ENCODE measurements at regions of chr1 and their contacts with region 1.

Region 1: DNA sequence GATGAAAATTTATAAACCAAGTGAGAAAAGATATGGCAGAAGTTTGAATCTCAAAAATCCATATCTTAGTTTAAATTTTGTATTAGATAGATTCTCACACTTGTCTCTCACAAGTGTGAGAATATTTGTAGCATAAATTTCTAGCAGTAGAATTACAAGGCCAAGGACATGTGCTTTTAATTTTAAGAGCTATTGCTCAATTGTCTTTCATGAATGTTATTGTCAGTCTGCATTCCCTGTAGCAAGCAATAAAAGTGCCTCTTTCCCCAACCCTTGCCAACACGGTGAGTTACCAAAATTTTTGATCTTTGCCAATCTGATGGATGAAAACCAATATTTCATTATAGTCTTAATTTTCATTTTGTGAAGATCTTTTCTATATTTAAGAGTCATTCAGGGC is 64.0 kb downstream of the CTH start:
- DNase-seq: no peak
- H3K4me3 ChIP-seq: no peak overlapping the region
- H3K4me3 Mint-ChIP-seq: peak overlapping the region in 1 of 8 donors; percentile 13
- H3K27ac ChIP-seq: no peak overlapping the region
- H3K27ac Mint-ChIP-seq: no peak overlapping the region
- H3K4me1 ChIP-seq: no peaks in the 10 kb centered on the region
- H3K4me1 Mint-ChIP-seq: no peaks in the 10 kb centered on the region
- H3K27me3 ChIP-seq: no peaks in the 10 kb centered on the region
- H3K27me3 Mint-ChIP-seq: peaks cover 3 to 6% of the 10 kb centered on the region in 2 donors

Region 2: DNA sequence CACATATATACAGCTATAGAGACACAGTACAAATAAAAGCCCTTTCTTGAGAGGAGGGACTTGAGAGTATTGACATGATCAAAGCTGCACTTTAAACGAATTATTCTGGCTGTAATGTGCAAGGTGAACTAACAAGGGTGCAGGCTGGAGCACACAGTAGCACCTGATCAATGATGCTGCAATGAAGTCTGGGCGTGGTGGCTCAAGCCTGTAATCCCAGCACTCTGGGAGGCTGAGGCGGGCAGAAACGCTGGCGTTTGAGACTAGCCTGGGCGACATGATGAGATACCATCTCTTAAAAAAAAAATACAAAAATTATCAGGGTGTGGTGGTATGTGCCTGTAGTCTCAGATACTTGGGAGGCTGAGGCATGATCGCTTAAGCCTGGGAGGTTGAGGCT is 78.0 kb before region 1 on chr1:
- CTCF ChIA-PET with region 1: no interaction called
- POLR2A ChIA-PET with region 1: no interaction called
- intact Hi-C with region 1: no loop called
- DNase-seq: no peak
- H3K4me3 ChIP-seq: no peak overlapping the region
- H3K4me3 Mint-ChIP-seq: no peak overlapping the region
- H3K27ac ChIP-seq: no peak overlapping the region
- H3K27ac Mint-ChIP-seq: no peak overlapping the region
- H3K4me1 ChIP-seq: no peaks in the 10 kb centered on the region
- H3K4me1 Mint-ChIP-seq: no peaks in the 10 kb centered on the region
- H3K27me3 ChIP-seq: no peaks in the 10 kb centered on the region
- H3K27me3 Mint-ChIP-seq: peaks cover 4 to 12% of the 10 kb centered on the region in 2 donors

Region 3: DNA sequence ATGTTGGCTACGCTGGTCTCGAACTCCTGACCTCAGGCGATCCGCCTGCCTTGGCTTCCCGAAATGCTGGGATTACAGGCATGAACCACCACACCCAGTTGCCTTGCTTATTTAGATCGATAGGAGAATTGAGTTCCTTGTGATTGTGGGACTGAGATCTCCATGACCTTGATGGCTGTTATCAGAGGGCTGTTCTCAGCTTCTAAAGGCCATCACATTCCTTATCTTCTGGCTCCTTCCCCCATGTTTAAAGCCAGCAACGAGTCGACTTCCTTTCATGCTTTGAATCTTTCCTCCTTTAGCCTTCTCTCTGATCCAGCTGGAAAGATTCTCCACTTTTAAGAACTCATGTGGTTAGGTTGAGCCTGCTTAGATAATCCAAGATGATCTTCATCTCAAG is 26.0 kb before region 1 on chr1:
- CTCF ChIA-PET with region 1: no interaction called
- POLR2A ChIA-PET with region 1: no interaction called
- intact Hi-C with region 1: loop called (anchors 1 kb)
- DNase-seq: no peak
- H3K4me3 ChIP-seq: no peak overlapping the region
- H3K4me3 Mint-ChIP-seq: no peak overlapping the region
- H3K27ac ChIP-seq: no peak overlapping the region
- H3K27ac Mint-ChIP-seq: no peak overlapping the region
- H3K4me1 ChIP-seq: no peaks in the 10 kb centered on the region
- H3K4me1 Mint-ChIP-seq: no peaks in the 10 kb centered on the region
- H3K27me3 ChIP-seq: no peaks in the 10 kb centered on the region
- H3K27me3 Mint-ChIP-seq: peaks cover 4 to 7% of the 10 kb centered on the region in 2 donors

Region 4: DNA sequence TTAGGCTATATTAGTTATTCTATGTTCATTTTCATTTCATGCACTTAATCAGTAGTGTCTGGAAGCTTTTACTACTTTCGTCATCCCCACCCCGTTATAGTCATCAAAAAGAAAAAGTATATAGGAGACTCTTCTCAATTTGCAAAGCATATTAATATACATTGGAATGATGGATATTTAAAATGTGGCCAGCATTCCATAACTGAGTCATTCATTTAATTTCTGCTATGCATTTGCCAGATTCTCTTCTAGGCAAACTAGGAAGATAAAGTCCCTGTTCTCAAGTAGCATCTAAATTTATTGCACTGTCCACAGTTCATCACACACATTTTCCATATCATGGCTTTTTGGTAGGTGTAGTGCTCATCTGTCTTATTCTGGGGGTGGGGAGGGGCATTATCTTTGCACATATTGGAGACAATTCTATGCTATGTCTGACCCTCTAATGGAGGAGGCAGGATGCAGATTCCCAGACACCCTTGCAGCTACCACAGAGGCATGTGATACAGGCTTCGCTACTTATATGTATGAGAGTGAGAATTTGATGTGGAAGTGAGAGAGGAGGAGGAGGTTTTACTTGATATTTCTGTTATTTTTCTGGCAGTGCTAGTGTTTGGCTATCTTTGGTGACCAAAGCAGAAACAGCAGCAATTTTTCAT is 61.8 kb after region 1 on chr1:
- CTCF ChIA-PET with region 1: no interaction called
- POLR2A ChIA-PET with region 1: no interaction called
- intact Hi-C with region 1: no loop called
- DNase-seq: no peak
- H3K4me3 ChIP-seq: no peak overlapping the region
- H3K4me3 Mint-ChIP-seq: no peak overlapping the region
- H3K27ac ChIP-seq: no peak overlapping the region
- H3K27ac Mint-ChIP-seq: no peak overlapping the region
- H3K4me1 ChIP-seq: no peaks in the 10 kb centered on the region
- H3K4me1 Mint-ChIP-seq: no peaks in the 10 kb centered on the region
- H3K27me3 ChIP-seq: no peaks in the 10 kb centered on the region
- H3K27me3 Mint-ChIP-seq: peaks cover 6 to 18% of the 10 kb centered on the region in 2 donors

Measured in CD4-positive, alpha-beta memory T cell (primary cell).